SK-N-SH (cell line): ENCODE measurements at regions of chr6 and their contacts with region 1.

Region 1: DNA sequence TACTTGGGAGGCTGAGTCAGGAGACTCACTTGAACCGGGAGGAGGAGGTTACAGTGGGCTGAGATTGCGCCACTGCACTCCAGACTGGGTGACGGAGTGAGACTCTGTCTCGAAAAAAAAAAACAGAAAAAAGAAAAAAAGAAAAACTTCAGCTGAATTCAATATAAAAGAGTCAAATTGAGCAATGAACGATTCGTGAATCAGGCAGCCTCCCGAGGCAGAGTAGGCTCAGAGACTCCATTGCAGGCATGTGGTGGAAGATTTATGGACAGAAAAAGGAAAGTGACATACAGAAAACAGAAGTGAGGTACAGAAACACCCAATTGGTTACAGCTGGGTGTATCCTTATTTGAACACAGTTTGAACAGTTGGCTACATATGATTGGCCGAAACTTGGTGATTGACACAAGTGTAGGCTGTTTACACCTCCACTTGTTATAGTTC is 56.3 kb downstream of the HLA-DPB1 start:
- DNase-seq: no peak
- H3K4me3 ChIP-seq: no peak overlapping the region
- H3K27ac ChIP-seq: no peak overlapping the region
- H3K4me1 ChIP-seq: no peaks in the 10 kb centered on the region
- H3K27me3 ChIP-seq: peaks cover 44% of the 10 kb centered on the region; the same call in 1 of the 2 replicates
- CTCF ChIP-seq: no peak
- EP300 ChIP-seq: no peak
- RAD21 ChIP-seq: no peak

Region 2: DNA sequence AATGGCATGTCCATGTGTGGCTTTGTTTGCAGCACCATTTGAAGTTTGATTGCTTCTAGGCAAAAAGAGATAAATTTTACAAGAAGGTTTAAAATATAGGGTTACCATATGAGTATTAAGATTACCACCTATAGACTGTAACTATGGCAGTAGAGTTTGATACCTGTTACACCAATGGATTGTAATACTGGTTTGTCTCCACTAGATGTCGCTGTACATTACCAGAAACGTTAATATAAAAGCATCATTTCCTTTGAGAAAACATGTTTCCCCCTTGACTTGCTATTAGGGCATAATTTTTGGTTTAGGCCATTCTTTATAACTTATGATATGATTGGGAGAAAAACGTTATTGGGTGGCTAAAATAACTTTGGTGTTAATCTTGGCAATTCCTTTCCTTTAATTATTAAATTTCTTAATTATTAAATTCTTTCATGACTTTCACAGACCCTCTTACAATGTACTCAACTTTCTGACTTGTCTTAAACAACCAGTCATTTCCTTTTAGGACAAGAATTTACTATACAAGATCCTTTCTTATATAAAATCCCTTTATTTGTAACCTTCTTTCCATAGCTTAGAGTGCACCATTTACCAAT is 13.5 kb before region 1 on chr6:
- CTCF ChIA-PET with region 1: interaction called, 27 read pairs
- POLR2A ChIA-PET with region 1: no interaction called
- DNase-seq: peak; percentile 46
- H3K4me3 ChIP-seq: peak overlapping the region in 1 of 2 experiments; percentile 43; a peak in 1 of 4 replicates
- H3K27ac ChIP-seq: no peak overlapping the region
- H3K4me1 ChIP-seq: no peaks in the 10 kb centered on the region; a peak in 1 of 4 replicates
- H3K27me3 ChIP-seq: peaks cover 42% of the 10 kb centered on the region; the same call in 1 of the 2 replicates
- CTCF ChIP-seq: peak; percentile 88
- EP300 ChIP-seq: no peak
- RAD21 ChIP-seq: peak; percentile 68